ENCODE measurements at regions of chr2 and their contacts with region 1.

Region 1: GRCh38 chr2:68062680-68063387 is at the start of gene C1D:
- DNase-seq: peak; percentile 93
- H3K4me3 ChIP-seq: peak within 1 kb of the TSS; percentile 93
- H3K27ac ChIP-seq: peak within 1 kb of the TSS; percentile 50
- H3K4me1 ChIP-seq: peaks cover 21% of the 10 kb centered on the region
- CTCF ChIP-seq: no peak
- total RNA-seq, gene C1D: 19.1 and 30.1 TPM in 2 replicates

Region 2: DNA sequence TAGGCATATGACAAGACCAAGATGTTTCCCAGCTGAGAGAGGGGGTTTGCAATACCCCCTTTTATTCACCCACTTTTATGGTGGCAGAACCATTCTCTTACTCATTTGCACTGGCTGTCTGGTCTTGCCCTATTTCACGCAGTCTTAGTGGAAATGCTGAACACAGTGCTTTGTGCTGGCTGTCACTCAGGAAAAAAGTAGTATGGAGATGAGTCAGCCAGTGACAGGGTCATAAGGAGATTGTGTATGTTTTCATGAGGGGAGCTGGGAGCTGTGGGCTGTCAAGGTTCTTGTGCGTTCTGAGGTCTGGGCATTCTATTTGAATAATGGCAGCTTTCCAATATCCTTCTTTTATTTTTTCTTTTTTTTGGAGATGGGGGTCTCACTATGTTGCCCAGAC is 267.9 kb after region 1 on chr2:
- CTCF ChIA-PET with region 1: no interaction called
- POLR2A ChIA-PET with region 1: interaction called, 10 read pairs
- intact Hi-C with region 1: no loop called
- DNase-seq: no peak
- H3K4me3 ChIP-seq: no peak overlapping the region
- H3K27ac ChIP-seq: no peak overlapping the region
- H3K4me1 ChIP-seq: no peaks in the 10 kb centered on the region
- CTCF ChIP-seq: no peak